Calu3 (cell line): ENCODE measurements at regions of chr5 and their contacts with region 1.

Region 1: GRCh38 chr5:107652839-107653607 is 17.7 kb downstream of the EFNA5 start:
- DNase-seq: no peak
- H3K4me3 Mint-ChIP-seq: peak overlapping the region; percentile 54
- H3K27ac Mint-ChIP-seq: no peak overlapping the region
- H3K4me1 Mint-ChIP-seq: peaks cover 53% of the 10 kb centered on the region
- H3K27me3 Mint-ChIP-seq: no peaks in the 10 kb centered on the region
- CTCF ChIP-seq: no peak

Region 2: DNA sequence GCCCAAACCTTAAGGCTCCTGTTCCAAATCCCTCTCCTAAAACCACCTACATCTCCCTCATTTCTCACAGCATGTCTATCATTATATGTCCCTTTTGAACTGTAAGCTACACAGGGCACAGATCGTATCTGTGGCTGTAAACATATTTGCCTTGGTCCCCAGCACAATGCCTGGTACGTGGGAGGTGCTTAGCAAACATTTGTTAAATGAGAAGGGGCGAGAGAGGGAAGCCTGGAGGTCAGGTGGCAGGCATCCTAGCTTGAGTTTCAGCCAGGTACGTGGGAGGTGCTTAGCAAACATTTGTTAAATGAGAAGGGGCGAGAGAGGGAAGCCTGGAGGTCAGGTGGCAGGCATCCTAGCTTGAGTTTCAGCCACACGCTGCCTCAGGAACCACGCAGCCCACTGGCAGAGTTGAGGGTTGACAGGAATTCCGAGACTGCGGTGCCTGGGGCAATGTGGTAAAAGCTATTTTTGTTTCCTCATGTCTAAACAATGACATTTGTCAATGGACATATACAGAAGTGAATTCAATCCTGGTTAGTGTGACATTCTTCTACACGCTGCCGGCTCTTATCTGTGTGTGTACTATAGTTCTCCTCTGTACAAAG is 95.9 kb before region 1 on chr5:
- CTCF ChIA-PET with region 1: no interaction called
- intact Hi-C with region 1: no loop called
- DNase-seq: peak; percentile 92
- H3K4me3 Mint-ChIP-seq: peak overlapping the region; percentile 45
- H3K27ac Mint-ChIP-seq: peak overlapping the region; percentile 80
- H3K4me1 Mint-ChIP-seq: peaks cover 87% of the 10 kb centered on the region
- H3K27me3 Mint-ChIP-seq: no peaks in the 10 kb centered on the region
- CTCF ChIP-seq: no peak

Region 3: GRCh38 chr5:107604832-107605389 is 48.1 kb before region 1 on chr5:
- CTCF ChIA-PET with region 1: no interaction called
- intact Hi-C with region 1: loop called (anchors 5 kb)
- DNase-seq: no peak
- H3K4me3 Mint-ChIP-seq: no peak overlapping the region
- H3K27ac Mint-ChIP-seq: no peak overlapping the region
- H3K4me1 Mint-ChIP-seq: peaks cover 90% of the 10 kb centered on the region
- H3K27me3 Mint-ChIP-seq: no peaks in the 10 kb centered on the region
- CTCF ChIP-seq: no peak

Region 4: GRCh38 chr5:107618242-107618641 is 34.8 kb before region 1 on chr5:
- CTCF ChIA-PET with region 1: no interaction called
- intact Hi-C with region 1: loop called (anchors 5 kb)
- DNase-seq: no peak
- H3K4me3 Mint-ChIP-seq: no peak overlapping the region
- H3K27ac Mint-ChIP-seq: no peak overlapping the region
- H3K4me1 Mint-ChIP-seq: peaks cover 73% of the 10 kb centered on the region
- H3K27me3 Mint-ChIP-seq: no peaks in the 10 kb centered on the region
- CTCF ChIP-seq: no peak